Adrenal gland (tissue), 19 donors: ENCODE measurements at regions of chr18 and their contacts with region 1.

Region 1: GRCh38 chr18:6397931-6398566 is 16.7 kb downstream of the L3MBTL4 start:
- DNase-seq: peak in 3 of 7 donors; percentile 37 to 45 (median 44)
- H3K4me3 ChIP-seq: no peak overlapping the region
- H3K27ac ChIP-seq: peak overlapping the region in 2 of 5 donors; percentile 18 to 26
- H3K4me1 ChIP-seq: peaks cover 4 to 10% of the 10 kb centered on the region in 2 donors
- H3K27me3 ChIP-seq: no peaks in the 10 kb centered on the region
- CTCF ChIP-seq: no peak
- POLR2A ChIP-seq: no peak

Region 2: DNA sequence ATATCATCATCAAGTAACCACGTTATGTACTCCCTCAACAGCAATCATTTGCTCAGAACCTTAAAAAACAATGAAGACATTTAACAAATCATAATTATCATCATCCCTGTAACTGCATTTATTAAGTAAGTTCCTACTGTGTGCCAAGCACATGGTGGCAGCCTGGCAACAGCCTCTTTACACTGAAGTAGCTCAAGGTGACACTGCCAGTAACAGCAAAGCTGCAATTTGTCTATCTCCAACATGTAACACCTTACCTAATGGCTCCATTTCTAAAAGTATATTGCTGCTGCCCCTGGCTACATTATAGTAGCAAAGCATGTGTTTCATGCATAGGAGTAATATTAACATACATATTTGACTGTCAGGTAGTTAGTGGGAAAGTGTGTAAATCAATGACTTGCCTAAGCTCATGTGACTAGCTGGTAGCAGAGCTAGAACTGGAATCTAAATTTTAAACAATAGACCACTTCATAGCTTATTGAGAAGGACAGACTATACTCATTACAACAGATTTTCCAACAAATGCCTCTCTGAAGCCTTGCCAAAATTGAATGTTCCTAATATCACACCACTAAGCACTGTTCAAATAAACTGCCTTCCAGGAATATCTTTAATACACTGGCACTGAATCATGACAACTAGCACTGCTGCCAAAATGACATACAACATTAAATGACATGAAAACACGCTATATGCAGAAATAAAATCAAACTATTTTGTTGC is 70.0 kb before region 1 on chr18:
- intact Hi-C with region 1: loop called in 1 of 2 experiments (anchors 10 kb)
- DNase-seq: no peak
- H3K4me3 ChIP-seq: no peak overlapping the region
- H3K27ac ChIP-seq: no peak overlapping the region
- H3K4me1 ChIP-seq: peaks cover 0 to 4% of the 10 kb centered on the region in 2 donors
- H3K27me3 ChIP-seq: no peaks in the 10 kb centered on the region
- CTCF ChIP-seq: no peak
- POLR2A ChIP-seq: no peak